Caco-2 (cell line): ENCODE measurements at regions of chr7 and their contacts with region 1.

Region 1: GRCh38 chr7:43954524-43955228 is 28.4 kb downstream of the UBE2D4 start:
- DNase-seq: peak; percentile 56 to 66
- H3K4me3 ChIP-seq: no peak overlapping the region
- H3K4me3 Mint-ChIP-seq: no peak overlapping the region
- H3K27ac Mint-ChIP-seq: no peak overlapping the region
- H3K4me1 ChIP-seq: no peaks in the 10 kb centered on the region
- H3K4me1 Mint-ChIP-seq: no peaks in the 10 kb centered on the region
- H3K27me3 ChIP-seq: no peaks in the 10 kb centered on the region
- H3K27me3 Mint-ChIP-seq: no peaks in the 10 kb centered on the region
- CTCF ChIP-seq: peak; percentile 51 to 74

Region 2: GRCh38 chr7:43850348-43851116 is 104.1 kb before region 1 on chr7:
- CTCF ChIA-PET with region 1: no interaction called
- POLR2A ChIA-PET with region 1: no interaction called
- intact Hi-C with region 1: loop called (anchors 5 kb)
- DNase-seq: no peak
- H3K4me3 ChIP-seq: no peak overlapping the region
- H3K4me3 Mint-ChIP-seq: no peak overlapping the region
- H3K27ac Mint-ChIP-seq: no peak overlapping the region
- H3K4me1 ChIP-seq: no peaks in the 10 kb centered on the region
- H3K4me1 Mint-ChIP-seq: no peaks in the 10 kb centered on the region
- H3K27me3 ChIP-seq: no peaks in the 10 kb centered on the region
- H3K27me3 Mint-ChIP-seq: no peaks in the 10 kb centered on the region
- CTCF ChIP-seq: no peak

Region 3: DNA sequence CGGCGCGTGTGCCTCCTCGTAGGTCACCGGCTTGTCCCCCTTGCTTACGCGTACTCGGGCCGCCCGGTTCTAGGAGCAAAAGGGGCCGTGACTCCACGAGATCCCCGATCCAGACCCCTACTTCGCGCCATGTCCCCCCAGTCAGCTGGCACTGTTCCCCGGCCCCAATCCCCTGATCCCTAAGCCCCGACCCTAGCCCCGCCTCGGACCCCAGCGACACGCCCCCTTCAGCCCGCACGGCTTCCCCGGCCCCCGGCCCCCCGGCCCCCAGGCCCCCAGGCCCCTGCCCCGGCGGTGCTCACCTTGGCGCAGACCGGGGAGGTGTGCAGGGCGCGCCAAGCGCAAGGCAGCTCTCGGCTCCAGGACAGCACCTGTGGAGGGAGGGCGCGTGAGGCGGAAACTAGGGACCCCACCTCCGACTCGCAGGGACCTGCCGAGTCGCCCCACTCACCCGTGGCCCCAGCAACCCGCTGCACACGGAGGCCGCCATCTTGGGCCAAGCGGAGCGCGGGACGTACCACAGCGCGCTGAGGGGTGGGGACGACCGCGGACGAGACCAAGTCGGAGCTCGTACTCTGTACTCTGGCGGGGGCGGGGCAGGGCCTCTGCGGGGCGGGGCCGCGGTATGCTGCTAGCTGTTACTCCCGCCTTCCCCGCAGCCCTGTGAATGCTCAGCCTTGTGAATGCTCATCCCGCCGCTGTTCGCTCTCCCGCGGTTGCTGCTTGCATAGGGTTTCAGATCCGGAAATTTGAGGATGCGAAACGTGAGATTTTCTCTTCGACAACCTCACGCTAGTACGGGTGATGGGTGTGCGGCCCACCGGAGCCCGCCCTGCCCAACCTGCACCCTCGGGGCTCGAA is 85.4 kb before region 1 on chr7 and contains the start of gene MRPS24:
- CTCF ChIA-PET with region 1: no interaction called
- POLR2A ChIA-PET with region 1: interaction called, 3 read pairs
- intact Hi-C with region 1: loop called (anchors 5 kb)
- DNase-seq: peak; percentile 94 to 96
- H3K4me3 ChIP-seq: peak within 1 kb of the TSS; percentile 97
- H3K4me3 Mint-ChIP-seq: peak within 1 kb of the TSS; percentile 92
- H3K27ac Mint-ChIP-seq: peak within 1 kb of the TSS; percentile 87
- H3K4me1 ChIP-seq: peaks cover 13% of the 10 kb centered on the region
- H3K4me1 Mint-ChIP-seq: peaks cover 21% of the 10 kb centered on the region
- H3K27me3 ChIP-seq: no peaks in the 10 kb centered on the region
- H3K27me3 Mint-ChIP-seq: no peaks in the 10 kb centered on the region
- CTCF ChIP-seq: no peak
- total RNA-seq, gene MRPS24: 143 and 150 TPM in 2 replicates

Region 4: GRCh38 chr7:43942997-43943704 is 11.5 kb before region 1 on chr7:
- CTCF ChIA-PET with region 1: interaction called, 3 read pairs
- POLR2A ChIA-PET with region 1: no interaction called
- intact Hi-C with region 1: loop called (anchors 1 kb)
- DNase-seq: peak; percentile 44
- H3K4me3 ChIP-seq: no peak overlapping the region
- H3K4me3 Mint-ChIP-seq: no peak overlapping the region
- H3K27ac Mint-ChIP-seq: peak overlapping the region; percentile 26
- H3K4me1 ChIP-seq: no peaks in the 10 kb centered on the region
- H3K4me1 Mint-ChIP-seq: peaks cover 10% of the 10 kb centered on the region
- H3K27me3 ChIP-seq: no peaks in the 10 kb centered on the region
- H3K27me3 Mint-ChIP-seq: no peaks in the 10 kb centered on the region
- CTCF ChIP-seq: peak in 1 of 2 experiments; percentile 61